ENCODE measurements at regions of chr6 and their contacts with region 1.

Region 1: GRCh38 chr6:159968440-159969203 is at the start of gene IGF2R:
- DNase-seq: peak; percentile 86 to 97 (median 94)
- ATAC-seq: peak; percentile 89
- H3K4me3 ChIP-seq: peak within 1 kb of the TSS; percentile 76
- H3K4me3 Mint-ChIP-seq: peak within 1 kb of the TSS; percentile 98
- H3K27ac ChIP-seq: peak within 1 kb of the TSS; percentile 31 to 42
- H3K27ac Mint-ChIP-seq: peak within 1 kb of the TSS; percentile 91
- H3K4me1 ChIP-seq: peaks cover 41% of the 10 kb centered on the region
- H3K4me1 Mint-ChIP-seq: peaks cover 45% of the 10 kb centered on the region
- H3K27me3 ChIP-seq: no peaks in the 10 kb centered on the region
- H3K27me3 Mint-ChIP-seq: no peaks in the 10 kb centered on the region
- CTCF ChIP-seq: no peak
- total RNA-seq, gene IGF2R: 43.8 to 46.7 TPM

Region 2: GRCh38 chr6:160010067-160010466 is 41.4 kb after region 1 on chr6:
- CTCF ChIA-PET with region 1: no interaction called
- POLR2A ChIA-PET with region 1: interaction called, 11 read pairs
- intact Hi-C with region 1: loop called (anchors 5 kb)
- DNase-seq: no peak
- ATAC-seq: no peak
- H3K4me3 ChIP-seq: no peak overlapping the region
- H3K4me3 Mint-ChIP-seq: no peak overlapping the region
- H3K27ac ChIP-seq: no peak overlapping the region
- H3K27ac Mint-ChIP-seq: no peak overlapping the region
- H3K4me1 ChIP-seq: peaks cover 21% of the 10 kb centered on the region
- H3K4me1 Mint-ChIP-seq: peaks cover 59% of the 10 kb centered on the region
- H3K27me3 ChIP-seq: no peaks in the 10 kb centered on the region
- H3K27me3 Mint-ChIP-seq: no peaks in the 10 kb centered on the region
- CTCF ChIP-seq: no peak

Measured in CD4-positive, alpha-beta T cell (primary cell).